Natural killer cell (primary cell): ENCODE measurements at regions of chr1 and their contacts with region 1.

Region 1: DNA sequence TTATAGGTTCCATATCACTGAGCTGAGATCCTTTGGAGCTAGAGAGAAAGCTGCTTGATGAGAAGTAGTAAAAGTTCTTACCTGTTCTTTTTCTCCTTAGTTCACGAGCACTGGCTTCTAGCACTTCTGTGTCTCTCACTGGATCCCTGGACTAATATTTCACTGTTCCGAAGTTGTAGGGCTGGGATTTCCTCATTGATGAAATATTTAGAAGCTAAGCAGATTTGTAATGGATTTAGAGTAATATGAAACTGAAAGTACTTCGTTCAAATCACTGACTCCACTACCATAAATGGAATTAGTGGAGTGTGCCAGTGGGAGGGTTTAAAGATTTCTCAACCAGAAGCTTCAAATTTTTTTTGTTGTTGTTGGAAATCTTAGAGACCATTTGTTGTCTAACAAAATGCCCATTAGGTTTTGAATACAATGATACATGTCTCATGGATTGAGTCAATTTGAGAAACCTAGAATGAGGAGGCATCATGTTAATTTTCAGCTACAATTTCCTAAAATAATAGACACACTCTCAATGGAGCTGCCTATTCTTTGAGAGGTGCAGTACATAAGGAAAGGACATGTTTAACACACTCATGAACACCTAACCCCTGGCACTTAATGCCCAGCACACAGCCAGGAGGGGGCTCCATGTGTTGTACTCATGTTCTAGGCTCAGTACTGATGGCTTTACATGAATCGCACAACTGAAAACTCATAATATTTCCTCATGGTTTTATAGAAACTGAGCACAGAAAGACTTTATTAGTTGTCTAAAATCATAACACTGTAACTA is at the start of gene GBP1:
- DNase-seq: peak in 1 of 2 donors; percentile 73
- ATAC-seq: peak; percentile 86 to 88 (median 87)
- H3K4me3 ChIP-seq: peak within 1 kb of the TSS; percentile 89
- H3K4me3 Mint-ChIP-seq: peak within 1 kb of the TSS; percentile 98
- H3K27ac ChIP-seq: peak within 1 kb of the TSS; percentile 94
- H3K27ac Mint-ChIP-seq: peak within 1 kb of the TSS; percentile 87 to 95
- H3K4me1 ChIP-seq: peaks cover 9% of the 10 kb centered on the region
- H3K4me1 Mint-ChIP-seq: peaks cover 55 to 58% of the 10 kb centered on the region in 2 donors
- H3K27me3 ChIP-seq: no peaks in the 10 kb centered on the region
- H3K27me3 Mint-ChIP-seq: no peaks in the 10 kb centered on the region
- CTCF ChIP-seq: no peak
- total RNA-seq, gene GBP1: 32.0 to 41.2 (median 34.8) TPM

Region 2: DNA sequence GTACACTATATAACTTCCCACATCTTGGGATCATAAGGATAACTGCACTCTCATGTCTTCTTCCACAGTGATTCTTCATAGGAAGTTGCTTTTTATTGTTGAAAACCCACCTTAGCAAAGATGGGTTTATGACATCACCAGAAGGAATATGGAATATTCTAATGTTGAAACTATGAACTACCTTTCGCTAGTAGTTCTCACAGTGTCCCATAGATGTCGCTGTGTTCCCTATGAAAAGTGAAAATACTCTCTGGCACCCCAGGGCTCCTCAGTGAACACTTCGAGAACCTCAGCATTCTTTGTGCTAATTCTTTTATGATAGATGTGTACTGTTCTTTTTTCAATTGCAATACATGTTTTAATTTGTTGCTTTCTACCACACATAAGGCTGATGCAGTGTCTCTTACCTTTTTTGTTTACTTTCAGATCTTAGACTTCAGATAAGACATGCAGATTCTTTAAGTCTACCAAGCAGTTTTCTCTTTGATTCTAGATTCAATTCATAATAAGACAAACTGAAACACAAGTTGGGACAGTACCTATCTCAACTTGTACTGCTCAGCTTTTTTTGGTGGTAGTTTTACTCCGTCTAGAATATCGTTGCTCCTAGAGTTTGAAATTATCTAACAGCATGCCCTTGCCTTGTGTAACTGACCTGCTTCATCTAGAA is 264.8 kb before region 1 on chr1:
- intact Hi-C with region 1: no loop called
- DNase-seq: peak in 1 of 2 donors; percentile 72
- ATAC-seq: peak; percentile 75 to 85 (median 82)
- H3K4me3 ChIP-seq: no peak overlapping the region
- H3K4me3 Mint-ChIP-seq: no peak overlapping the region
- H3K27ac ChIP-seq: no peak overlapping the region
- H3K27ac Mint-ChIP-seq: no peak overlapping the region
- H3K4me1 ChIP-seq: no peaks in the 10 kb centered on the region
- H3K4me1 Mint-ChIP-seq: peaks cover 5% of the 10 kb centered on the region in 2 donors
- H3K27me3 ChIP-seq: no peaks in the 10 kb centered on the region
- H3K27me3 Mint-ChIP-seq: no peaks in the 10 kb centered on the region
- CTCF ChIP-seq: peak; percentile 78

Region 3: GRCh38 chr1:89022167-89022959 is 42.9 kb before region 1 on chr1 and contains the start of gene GBP3:
- intact Hi-C with region 1: loop called (anchors 5 kb)
- DNase-seq: peak in 1 of 2 donors; percentile 67
- ATAC-seq: peak; percentile 82 to 84 (median 83)
- H3K4me3 ChIP-seq: peak within 1 kb of the TSS; percentile 60
- H3K4me3 Mint-ChIP-seq: peak within 1 kb of the TSS; percentile 95
- H3K27ac ChIP-seq: peak within 1 kb of the TSS; percentile 84
- H3K27ac Mint-ChIP-seq: peak within 1 kb of the TSS; percentile 86 to 92
- H3K4me1 ChIP-seq: peaks cover 24% of the 10 kb centered on the region
- H3K4me1 Mint-ChIP-seq: peaks cover 53 to 55% of the 10 kb centered on the region in 2 donors
- H3K27me3 ChIP-seq: no peaks in the 10 kb centered on the region
- H3K27me3 Mint-ChIP-seq: no peaks in the 10 kb centered on the region
- CTCF ChIP-seq: no peak
- total RNA-seq, gene GBP3: 36.1 to 52.5 (median 49.0) TPM

Region 4: GRCh38 chr1:89276690-89277089 is 211.4 kb after region 1 on chr1:
- intact Hi-C with region 1: loop called (anchors 5 kb)
- DNase-seq: peak in 1 of 2 donors; percentile 70
- ATAC-seq: no peak
- H3K4me3 ChIP-seq: no peak overlapping the region
- H3K4me3 Mint-ChIP-seq: no peak overlapping the region
- H3K27ac ChIP-seq: no peak overlapping the region
- H3K27ac Mint-ChIP-seq: peak overlapping the region; percentile 56 to 98
- H3K4me1 ChIP-seq: peaks cover 41% of the 10 kb centered on the region
- H3K4me1 Mint-ChIP-seq: peaks cover 72 to 76% of the 10 kb centered on the region in 2 donors
- H3K27me3 ChIP-seq: no peaks in the 10 kb centered on the region
- H3K27me3 Mint-ChIP-seq: no peaks in the 10 kb centered on the region
- CTCF ChIP-seq: no peak